HEK293 (cell line): ENCODE measurements at regions of chr18 and their contacts with region 1.

Region 1: GRCh38 chr18:30265190-30265589 is 777.4 kb downstream of the DSC3 start:
- H3K4me3 ChIP-seq: no peak overlapping the region
- H3K27ac ChIP-seq: no peak overlapping the region
- H3K4me1 ChIP-seq: no peaks in the 10 kb centered on the region
- CTCF ChIP-seq: no peak

Region 2: GRCh38 chr18:30280880-30281470 is 15.8 kb after region 1 on chr18:
- CTCF ChIA-PET with region 1: interaction called, 15 read pairs
- POLR2A ChIA-PET with region 1: no interaction called
- H3K4me3 ChIP-seq: no peak overlapping the region
- H3K27ac ChIP-seq: no peak overlapping the region
- H3K4me1 ChIP-seq: no peaks in the 10 kb centered on the region
- CTCF ChIP-seq: no peak